ENCODE measurements at regions of chr17 and their contacts with region 1.

Region 1: DNA sequence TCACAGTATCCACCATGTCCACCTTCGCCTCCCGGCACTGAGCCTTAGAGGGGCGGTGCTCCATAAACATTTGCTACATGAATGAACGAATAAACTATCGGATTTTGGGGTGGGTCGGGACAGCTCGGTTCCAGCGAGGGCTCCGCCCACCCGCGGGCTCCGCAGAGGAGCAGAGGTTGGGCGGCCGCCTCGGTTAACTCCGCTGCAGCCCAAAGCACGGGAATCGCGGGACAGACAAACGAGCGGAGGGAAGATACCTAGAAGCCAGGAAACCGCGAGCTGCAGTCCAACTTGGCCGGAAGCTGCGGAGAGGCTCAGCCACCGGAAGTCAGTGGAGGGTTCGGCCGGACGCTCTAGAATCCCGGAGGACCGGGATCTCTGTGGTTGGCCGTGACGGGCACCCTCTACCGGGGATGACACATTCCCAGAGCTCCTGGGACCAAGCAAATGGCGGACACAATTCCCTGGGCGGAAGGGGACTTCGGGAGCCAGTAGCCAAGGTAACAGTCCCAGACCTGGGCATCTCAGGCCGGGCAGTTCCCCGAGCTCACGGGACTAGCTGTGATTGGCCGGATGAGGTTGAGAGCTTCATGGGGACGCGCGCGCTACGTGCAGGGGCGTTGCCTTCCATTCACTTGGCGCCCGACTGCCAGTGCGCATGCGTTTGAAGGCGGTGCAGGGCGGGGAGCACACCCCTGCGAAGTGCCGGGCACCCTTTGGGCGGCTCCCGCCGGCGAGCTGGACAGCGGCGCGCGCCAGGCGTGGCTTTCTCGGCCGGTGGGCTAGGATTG is 501 bp upstream of the MAPK7 start:
- DNase-seq: peak; percentile 97 to 100 (median 98)
- H3K4me3 ChIP-seq: peak overlapping the region; percentile 67 to 99 (median 87)
- H3K27ac ChIP-seq: peak overlapping the region; percentile 79 to 99 (median 96)
- H3K27me3 ChIP-seq: no peaks in the 10 kb centered on the region
- CTCF ChIP-seq: peak in 52 of 56 donors; percentile 7 to 70 (median 40)

Region 2: DNA sequence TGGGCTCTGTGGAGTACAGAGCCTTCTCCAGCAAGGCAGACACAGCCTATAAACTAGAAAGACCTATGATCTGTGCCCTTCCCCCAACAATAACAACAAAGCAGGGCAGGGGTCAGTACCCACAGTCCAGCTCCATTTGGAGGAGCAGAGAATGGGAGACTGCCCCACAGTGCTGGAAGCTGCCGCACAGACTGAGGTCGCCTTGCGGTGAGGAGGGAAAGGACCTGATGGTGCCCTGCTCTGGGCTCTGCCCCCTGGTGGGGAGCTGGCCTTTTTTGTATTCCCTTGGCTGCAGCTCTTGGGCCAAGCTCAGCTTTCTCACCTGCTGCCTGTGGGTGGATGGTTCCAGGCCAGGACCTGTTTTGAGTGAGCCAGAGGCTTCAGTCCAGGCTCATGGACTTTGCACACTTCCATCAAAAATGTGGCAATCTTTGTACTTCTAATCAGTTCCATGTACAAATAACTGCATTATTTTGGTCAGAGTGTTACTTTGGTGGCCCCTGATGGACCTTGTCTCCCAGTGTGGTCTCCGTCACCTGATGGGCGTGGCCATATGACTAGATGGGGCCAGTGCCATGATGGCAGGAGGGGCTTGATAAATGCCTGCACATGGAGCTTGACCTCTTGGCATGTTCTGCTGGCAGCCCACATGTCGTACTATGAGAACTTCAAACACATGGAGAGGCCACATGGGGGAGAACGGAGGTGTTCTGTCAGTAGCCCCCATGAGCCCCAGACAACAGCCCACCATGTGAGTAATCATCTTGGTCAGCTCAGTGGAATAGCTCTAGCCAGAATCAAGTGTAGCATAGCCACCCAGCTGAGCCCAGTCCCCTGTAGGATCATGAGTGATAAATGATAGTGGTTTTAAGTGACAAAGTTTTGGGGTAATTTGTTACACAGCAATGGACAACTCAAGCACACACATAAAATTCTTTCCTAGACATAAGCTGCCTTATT is 39.5 kb before region 1 on chr17:
- intact Hi-C with region 1: no loop called
- DNase-seq: peak in 5 of 10 donors; percentile 45 to 68 (median 49)
- H3K4me3 ChIP-seq: no peak overlapping the region
- H3K27ac ChIP-seq: peak overlapping the region in 58 of 59 donors; percentile 25 to 91 (median 79)
- H3K27me3 ChIP-seq: no peaks in the 10 kb centered on the region
- CTCF ChIP-seq: peak in 54 of 56 donors; percentile 34 to 83 (median 62)

Region 3: GRCh38 chr17:19610311-19610710 is 232.5 kb after region 1 on chr17:
- intact Hi-C with region 1: no loop called
- DNase-seq: no peak
- H3K4me3 ChIP-seq: no peak overlapping the region
- H3K27ac ChIP-seq: no peak overlapping the region
- H3K27me3 ChIP-seq: no peaks in the 10 kb centered on the region
- CTCF ChIP-seq: no peak

Region 4: GRCh38 chr17:19766422-19767270 is 388.8 kb after region 1 on chr17:
- intact Hi-C with region 1: loop called in 1 of 2 experiments (anchors 5 kb)
- DNase-seq: peak; percentile 77 to 91 (median 84)
- H3K4me3 ChIP-seq: peak overlapping the region in 4 of 59 donors; percentile 5 to 23 (median 8)
- H3K27ac ChIP-seq: peak overlapping the region in 9 of 59 donors; percentile 6 to 58 (median 39)
- H3K27me3 ChIP-seq: no peaks in the 10 kb centered on the region
- CTCF ChIP-seq: peak; percentile 71 to 99 (median 97)

Region 5: GRCh38 chr17:19805006-19805405 is 427.2 kb after region 1 on chr17:
- intact Hi-C with region 1: no loop called
- DNase-seq: no peak
- H3K4me3 ChIP-seq: no peak overlapping the region
- H3K27ac ChIP-seq: no peak overlapping the region
- H3K27me3 ChIP-seq: no peaks in the 10 kb centered on the region
- CTCF ChIP-seq: no peak

Measured in dorsolateral prefrontal cortex (tissue), 120 donors.